ENCODE measurements at regions of chr2 and their contacts with region 1.

Region 1: DNA sequence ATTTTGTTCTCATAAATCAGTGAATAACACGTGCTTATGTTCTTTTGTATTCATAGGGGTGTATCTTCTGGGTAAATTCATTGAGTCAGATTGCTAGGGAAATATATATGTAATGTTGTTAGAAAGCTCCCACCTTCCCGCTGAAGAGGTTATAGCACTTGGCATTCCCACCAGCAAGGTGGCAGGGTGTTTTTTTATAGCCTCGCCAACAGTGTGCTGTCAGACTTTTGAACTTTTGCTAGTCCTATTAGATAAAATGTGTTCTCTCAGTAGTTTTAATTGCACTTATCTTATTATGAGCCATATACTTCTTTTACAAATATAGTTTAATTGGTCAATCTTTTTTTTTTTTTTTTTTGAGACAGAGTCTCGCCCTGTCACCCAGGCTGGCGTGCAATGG is 31.0 kb downstream of the MRPS9 start:
- DNase-seq: no peak
- H3K4me3 ChIP-seq: no peak overlapping the region
- H3K4me1 ChIP-seq: peaks cover 60% of the 10 kb centered on the region
- H3K27me3 ChIP-seq: no peaks in the 10 kb centered on the region

Region 2: GRCh38 chr2:104473546-104473945 is 595.3 kb before region 1 on chr2:
- in situ Hi-C with region 1: no loop called
- DNase-seq: no peak
- H3K4me3 ChIP-seq: no peak overlapping the region
- H3K4me1 ChIP-seq: no peaks in the 10 kb centered on the region
- H3K27me3 ChIP-seq: no peaks in the 10 kb centered on the region

Region 3: DNA sequence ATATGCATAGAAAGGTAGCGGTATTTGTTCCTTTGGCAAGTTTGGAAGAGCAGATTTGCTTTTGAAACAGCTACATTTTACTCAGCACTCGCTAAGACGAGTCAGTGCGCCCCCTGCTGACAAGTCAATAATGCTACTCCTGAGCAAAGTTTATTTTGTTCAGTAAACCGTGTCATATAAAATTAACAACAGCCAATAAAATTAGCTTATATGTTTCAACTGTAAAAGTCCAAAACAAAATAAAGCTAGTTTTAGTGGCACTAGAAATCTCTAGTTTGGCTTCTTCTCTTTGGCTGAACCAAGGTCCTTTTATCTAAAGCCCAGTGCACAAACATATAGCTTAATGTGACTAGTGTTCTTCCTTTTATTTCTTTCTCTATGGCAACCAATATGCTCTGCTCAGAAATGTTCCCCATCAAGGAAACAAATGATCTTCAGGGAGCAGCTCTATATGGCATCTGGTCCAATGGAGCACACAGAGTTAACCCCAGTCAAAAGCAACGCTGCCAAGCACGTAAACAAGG is 219.2 kb before region 1 on chr2:
- in situ Hi-C with region 1: loop called (anchors 10 kb)
- DNase-seq: peak; percentile 89 to 90
- H3K4me3 ChIP-seq: peak overlapping the region; percentile 69
- H3K4me1 ChIP-seq: peaks cover 41% of the 10 kb centered on the region
- H3K27me3 ChIP-seq: no peaks in the 10 kb centered on the region

Region 4: DNA sequence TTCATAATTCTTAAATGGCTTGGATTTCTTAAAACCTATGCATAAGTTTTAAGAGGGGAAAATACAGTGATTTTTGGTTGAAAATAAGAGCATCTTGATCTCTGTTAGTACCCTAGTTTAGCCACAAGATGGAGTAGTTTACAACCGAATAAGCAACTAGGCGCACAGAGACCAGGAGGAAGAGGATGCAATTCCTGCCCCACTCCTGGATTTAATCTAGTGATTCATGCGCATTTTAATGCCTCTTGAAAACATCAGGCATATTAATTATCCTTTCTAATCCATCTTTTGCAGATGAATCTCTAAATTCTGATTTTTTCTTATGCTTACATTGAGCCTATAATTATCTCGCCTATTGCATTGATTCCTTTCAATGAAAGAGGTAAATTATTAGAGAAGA is 45.7 kb after region 1 on chr2:
- in situ Hi-C with region 1: no loop called
- DNase-seq: peak in 1 of 2 experiments; percentile 65
- H3K4me3 ChIP-seq: no peak overlapping the region
- H3K4me1 ChIP-seq: no peaks in the 10 kb centered on the region
- H3K27me3 ChIP-seq: no peaks in the 10 kb centered on the region

Region 5: GRCh38 chr2:105660489-105660888 is 591.6 kb after region 1 on chr2:
- in situ Hi-C with region 1: no loop called
- DNase-seq: no peak
- H3K4me3 ChIP-seq: no peak overlapping the region
- H3K4me1 ChIP-seq: no peaks in the 10 kb centered on the region
- H3K27me3 ChIP-seq: no peaks in the 10 kb centered on the region

Measured in HAP-1 (cell line).